Endothelial cell of umbilical vein (primary cell): ENCODE measurements at regions of chr14 and their contacts with region 1.

Region 1: GRCh38 chr14:34322940-34323418 is 139.1 kb downstream of the SPTSSA start:
- DNase-seq: peak; percentile 57
- H3K4me3 ChIP-seq: no peak overlapping the region
- H3K27ac ChIP-seq: no peak overlapping the region
- H3K4me1 ChIP-seq: no peaks in the 10 kb centered on the region
- H3K27me3 ChIP-seq: peaks cover 5 to 11% of the 10 kb centered on the region in 2 experiments
- CTCF ChIP-seq: peak; percentile 69 to 72
- POLR2A ChIP-seq: no peak

Region 2: DNA sequence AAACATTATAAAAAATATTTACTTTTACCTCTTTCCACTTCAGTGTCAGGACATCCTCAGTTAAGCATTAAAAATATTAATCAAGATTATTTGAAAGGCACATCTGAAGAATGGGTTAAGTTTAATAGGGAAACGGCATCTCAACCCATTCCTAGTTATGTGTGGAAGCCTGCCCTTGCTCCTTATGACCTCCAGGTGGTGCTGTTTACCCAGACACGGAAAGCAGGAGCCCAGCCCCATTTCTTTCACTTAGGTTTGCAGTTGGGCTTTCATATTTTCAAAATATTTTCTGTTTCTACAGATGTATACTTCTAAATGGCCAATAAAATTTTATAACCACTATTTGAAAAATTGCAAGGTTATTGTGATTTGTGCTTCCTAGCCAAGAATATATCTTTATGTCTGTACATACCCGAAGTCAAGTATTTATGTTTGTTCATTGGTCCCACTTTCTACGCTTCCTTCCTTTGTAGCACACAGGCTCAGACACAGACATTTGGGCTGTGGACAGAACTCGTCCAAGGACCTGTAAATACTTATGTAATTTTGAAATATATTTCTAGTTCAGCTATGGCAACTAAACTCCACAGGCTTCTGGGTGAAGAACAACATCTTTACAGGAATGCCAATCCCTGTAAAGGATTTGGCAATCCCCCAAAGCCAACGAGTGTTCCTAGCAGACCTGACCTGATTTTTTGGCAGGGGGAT is 1746.7 kb before region 1 on chr14:
- CTCF ChIA-PET with region 1: interaction called, 19 read pairs
- POLR2A ChIA-PET with region 1: no interaction called
- dilution Hi-C with region 1: no loop called
- intact Hi-C with region 1: loop called (anchors 1 kb)
- DNase-seq: peak; percentile 57
- H3K4me3 ChIP-seq: no peak overlapping the region
- H3K27ac ChIP-seq: no peak overlapping the region
- H3K4me1 ChIP-seq: no peaks in the 10 kb centered on the region
- H3K27me3 ChIP-seq: peaks cover 20 to 41% of the 10 kb centered on the region in 2 experiments
- CTCF ChIP-seq: peak; percentile 87 to 92
- POLR2A ChIP-seq: no peak

Region 3: DNA sequence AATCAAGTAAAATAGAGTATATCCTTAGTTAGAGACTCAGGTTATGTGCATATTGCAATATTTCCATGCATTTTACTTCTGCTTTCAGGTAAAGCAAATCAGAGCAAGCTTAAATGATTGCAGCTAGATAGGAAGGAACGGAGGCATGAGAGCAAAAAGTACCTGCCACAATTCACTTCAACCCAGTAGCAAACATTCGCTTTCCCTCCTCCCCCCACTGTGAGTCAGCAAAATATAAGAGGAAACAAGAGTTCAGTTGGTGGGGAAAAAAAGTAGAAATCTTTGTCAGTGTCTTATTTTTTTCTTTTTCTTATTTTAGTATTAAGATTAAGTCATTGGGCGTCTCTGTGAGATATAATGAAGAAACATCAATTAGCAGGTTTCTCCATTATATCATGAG is 908.9 kb before region 1 on chr14:
- CTCF ChIA-PET with region 1: no interaction called
- POLR2A ChIA-PET with region 1: no interaction called
- dilution Hi-C with region 1: no loop called
- intact Hi-C with region 1: no loop called
- DNase-seq: no peak
- H3K4me3 ChIP-seq: no peak overlapping the region
- H3K27ac ChIP-seq: no peak overlapping the region
- H3K4me1 ChIP-seq: peaks cover 20% of the 10 kb centered on the region
- H3K27me3 ChIP-seq: no peaks in the 10 kb centered on the region
- CTCF ChIP-seq: no peak
- POLR2A ChIP-seq: no peak

Region 4: GRCh38 chr14:33839193-33840076 is 483.5 kb before region 1 on chr14:
- CTCF ChIA-PET with region 1: interaction called, 9 read pairs
- POLR2A ChIA-PET with region 1: no interaction called
- dilution Hi-C with region 1: no loop called
- intact Hi-C with region 1: loop called (anchors 1 kb)
- DNase-seq: peak; percentile 37
- H3K4me3 ChIP-seq: no peak overlapping the region
- H3K27ac ChIP-seq: no peak overlapping the region
- H3K4me1 ChIP-seq: no peaks in the 10 kb centered on the region
- H3K27me3 ChIP-seq: peaks cover 1 to 4% of the 10 kb centered on the region in 2 experiments
- CTCF ChIP-seq: peak; percentile 72 to 77
- POLR2A ChIP-seq: no peak

Region 5: GRCh38 chr14:34227834-34228649 is 94.9 kb before region 1 on chr14:
- CTCF ChIA-PET with region 1: no interaction called
- POLR2A ChIA-PET with region 1: no interaction called
- dilution Hi-C with region 1: no loop called
- intact Hi-C with region 1: loop called (anchors 5 kb)
- DNase-seq: peak; percentile 50
- H3K4me3 ChIP-seq: no peak overlapping the region
- H3K27ac ChIP-seq: no peak overlapping the region
- H3K4me1 ChIP-seq: no peaks in the 10 kb centered on the region
- H3K27me3 ChIP-seq: peaks cover 3 to 4% of the 10 kb centered on the region in 2 experiments
- CTCF ChIP-seq: peak; percentile 74 to 83
- POLR2A ChIP-seq: no peak

Region 6: GRCh38 chr14:34275078-34275477 is 47.9 kb before region 1 on chr14:
- CTCF ChIA-PET with region 1: no interaction called
- POLR2A ChIA-PET with region 1: no interaction called
- dilution Hi-C with region 1: no loop called
- intact Hi-C with region 1: no loop called
- DNase-seq: no peak
- H3K4me3 ChIP-seq: no peak overlapping the region
- H3K27ac ChIP-seq: no peak overlapping the region
- H3K4me1 ChIP-seq: no peaks in the 10 kb centered on the region
- H3K27me3 ChIP-seq: peaks cover 0 to 5% of the 10 kb centered on the region in 2 experiments
- CTCF ChIP-seq: no peak
- POLR2A ChIP-seq: no peak

Region 7: GRCh38 chr14:34310724-34311123 is 12.3 kb before region 1 on chr14:
- CTCF ChIA-PET with region 1: interaction called, 42 read pairs
- POLR2A ChIA-PET with region 1: no interaction called
- dilution Hi-C with region 1: no loop called
- intact Hi-C with region 1: no loop called
- DNase-seq: no peak
- H3K4me3 ChIP-seq: no peak overlapping the region
- H3K27ac ChIP-seq: no peak overlapping the region
- H3K4me1 ChIP-seq: no peaks in the 10 kb centered on the region
- H3K27me3 ChIP-seq: peaks cover 4 to 20% of the 10 kb centered on the region in 2 experiments
- CTCF ChIP-seq: no peak
- POLR2A ChIP-seq: no peak